ENCODE measurements at regions of chr10 and their contacts with region 1.

Region 1: GRCh38 chr10:42911359-42911758 is 128.8 kb downstream of the BMS1 start:
- DNase-seq: no peak
- ATAC-seq: no peak
- H3K4me3 ChIP-seq: no peak overlapping the region
- H3K27ac ChIP-seq: no peak overlapping the region
- H3K4me1 ChIP-seq: no peaks in the 10 kb centered on the region
- H3K27me3 ChIP-seq: no peaks in the 10 kb centered on the region
- CTCF ChIP-seq: no peak
- POLR2A ChIP-seq: no peak
- RAD21 ChIP-seq: no peak

Region 2: DNA sequence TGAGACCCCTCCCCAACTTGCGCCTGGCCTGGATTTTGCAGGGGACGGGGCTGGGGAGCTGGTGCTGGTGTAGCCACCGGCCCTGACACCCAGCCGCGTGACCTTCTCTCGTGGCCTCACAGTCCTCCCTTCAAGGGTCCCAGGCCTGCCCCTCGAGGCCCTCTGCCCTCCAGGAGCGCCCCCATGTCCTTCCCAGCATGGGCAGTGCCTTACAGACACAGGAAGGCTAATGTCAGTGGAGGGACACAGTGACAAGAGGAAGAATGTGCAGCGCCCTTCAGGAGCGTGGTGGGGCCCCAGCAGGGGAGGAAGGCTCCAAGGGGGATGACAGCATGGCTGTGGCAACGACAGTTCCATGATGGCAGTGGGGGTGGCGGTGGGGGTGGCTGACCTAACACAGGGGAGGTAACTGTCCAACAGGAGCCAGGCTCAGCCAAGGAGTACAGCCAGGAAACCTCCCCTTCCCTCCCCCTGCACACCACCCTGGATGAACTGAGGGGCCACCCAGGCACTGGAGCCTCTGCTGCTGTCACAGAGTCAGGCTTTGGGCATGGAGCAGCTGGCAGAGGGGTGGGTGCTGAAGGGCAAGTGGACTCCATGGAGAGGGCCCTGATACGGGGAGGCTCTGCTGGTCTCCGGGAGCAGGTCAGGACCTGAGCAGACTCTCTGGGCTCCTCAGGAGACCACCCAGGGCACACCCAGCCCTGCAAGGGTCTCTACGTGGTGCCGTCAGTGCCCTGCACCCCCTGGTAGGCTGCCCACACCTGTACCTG is 89.5 kb after region 1 on chr10:
- CTCF ChIA-PET with region 1: no interaction called
- POLR2A ChIA-PET with region 1: no interaction called
- dilution Hi-C with region 1: no loop called
- in situ Hi-C with region 1: no loop called
- intact Hi-C with region 1: loop called (anchors 10 kb)
- DNase-seq: no peak
- ATAC-seq: no peak
- H3K4me3 ChIP-seq: no peak overlapping the region
- H3K27ac ChIP-seq: no peak overlapping the region
- H3K4me1 ChIP-seq: no peaks in the 10 kb centered on the region
- H3K27me3 ChIP-seq: no peaks in the 10 kb centered on the region; the same call in 1 of the 2 replicates
- CTCF ChIP-seq: no peak
- POLR2A ChIP-seq: no peak
- RAD21 ChIP-seq: no peak

Region 3: GRCh38 chr10:43138021-43138756 is 226.8 kb after region 1 on chr10 and contains the start of gene CSGALNACT2:
- CTCF ChIA-PET with region 1: no interaction called
- POLR2A ChIA-PET with region 1: no interaction called
- dilution Hi-C with region 1: no loop called
- in situ Hi-C with region 1: no loop called
- intact Hi-C with region 1: no loop called
- DNase-seq: peak; percentile 86
- ATAC-seq: peak; percentile 68
- H3K4me3 ChIP-seq: peak within 1 kb of the TSS; percentile 98
- H3K27ac ChIP-seq: peak within 1 kb of the TSS; percentile 94
- H3K4me1 ChIP-seq: peaks cover 6% of the 10 kb centered on the region
- H3K27me3 ChIP-seq: no peaks in the 10 kb centered on the region; the same call in 1 of the 2 replicates
- CTCF ChIP-seq: 0 out of 2 replicates have a peak, but pooled peaks have one; percentile 5
- POLR2A ChIP-seq: peak; percentile 84
- RAD21 ChIP-seq: no peak
- total RNA-seq, gene CSGALNACT2: 6.5 and 11.4 TPM in 2 replicates